ENCODE measurements at regions of chr19 and their contacts with region 1.

Region 1: GRCh38 chr19:18846862-18847548 is 15.2 kb downstream of the UPF1 start:
- DNase-seq: peak; percentile 91
- ATAC-seq: peak; percentile 88

Region 2: DNA sequence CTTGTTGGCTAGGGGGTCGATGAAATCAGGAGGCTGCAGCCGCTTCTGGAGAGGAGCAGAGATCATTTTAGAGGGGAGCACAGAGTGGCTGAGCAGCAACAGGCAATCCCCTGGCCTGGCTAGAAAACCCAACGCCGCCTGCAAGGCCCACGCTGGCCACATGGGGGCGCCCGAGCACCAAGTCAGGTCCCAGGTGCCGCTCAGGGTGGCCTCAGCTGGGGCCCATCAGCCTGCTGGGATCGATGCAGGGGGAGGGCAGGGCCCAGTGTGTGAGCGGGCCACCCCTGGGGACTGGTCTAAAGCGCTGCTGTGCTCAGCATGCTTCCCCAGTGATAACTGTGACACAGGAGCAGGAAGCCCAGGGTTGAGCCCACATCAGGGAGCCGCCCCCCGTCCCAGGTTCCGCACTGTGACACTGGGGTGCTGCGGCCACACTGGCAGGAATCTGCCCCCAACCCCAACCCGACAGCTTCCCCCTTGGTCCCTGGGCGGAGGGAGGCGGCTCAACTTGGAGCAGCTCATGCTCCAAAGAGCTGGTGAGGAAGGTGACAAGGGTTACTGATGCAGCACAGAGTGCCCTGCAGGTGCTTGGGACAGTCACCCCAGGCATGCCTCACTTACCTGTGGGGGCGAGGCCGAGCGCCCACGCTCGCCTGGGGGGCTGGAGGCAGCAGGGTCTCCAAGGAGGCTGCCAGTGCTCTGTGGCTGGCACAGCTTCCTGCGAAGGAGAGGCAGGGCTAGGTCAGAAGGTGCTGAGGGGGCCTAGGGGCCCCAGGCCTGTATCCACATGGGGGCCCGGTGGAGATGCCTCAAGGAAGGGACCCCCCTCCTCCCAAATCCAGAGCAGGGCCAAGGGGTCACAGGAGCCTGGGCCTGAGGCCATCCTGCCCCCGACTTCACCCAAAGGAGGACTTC is 395.8 kb before region 1 on chr19:
- intact Hi-C with region 1: loop called (anchors 10 kb)
- DNase-seq: peak; percentile 92
- ATAC-seq: peak; percentile 80

Region 3: DNA sequence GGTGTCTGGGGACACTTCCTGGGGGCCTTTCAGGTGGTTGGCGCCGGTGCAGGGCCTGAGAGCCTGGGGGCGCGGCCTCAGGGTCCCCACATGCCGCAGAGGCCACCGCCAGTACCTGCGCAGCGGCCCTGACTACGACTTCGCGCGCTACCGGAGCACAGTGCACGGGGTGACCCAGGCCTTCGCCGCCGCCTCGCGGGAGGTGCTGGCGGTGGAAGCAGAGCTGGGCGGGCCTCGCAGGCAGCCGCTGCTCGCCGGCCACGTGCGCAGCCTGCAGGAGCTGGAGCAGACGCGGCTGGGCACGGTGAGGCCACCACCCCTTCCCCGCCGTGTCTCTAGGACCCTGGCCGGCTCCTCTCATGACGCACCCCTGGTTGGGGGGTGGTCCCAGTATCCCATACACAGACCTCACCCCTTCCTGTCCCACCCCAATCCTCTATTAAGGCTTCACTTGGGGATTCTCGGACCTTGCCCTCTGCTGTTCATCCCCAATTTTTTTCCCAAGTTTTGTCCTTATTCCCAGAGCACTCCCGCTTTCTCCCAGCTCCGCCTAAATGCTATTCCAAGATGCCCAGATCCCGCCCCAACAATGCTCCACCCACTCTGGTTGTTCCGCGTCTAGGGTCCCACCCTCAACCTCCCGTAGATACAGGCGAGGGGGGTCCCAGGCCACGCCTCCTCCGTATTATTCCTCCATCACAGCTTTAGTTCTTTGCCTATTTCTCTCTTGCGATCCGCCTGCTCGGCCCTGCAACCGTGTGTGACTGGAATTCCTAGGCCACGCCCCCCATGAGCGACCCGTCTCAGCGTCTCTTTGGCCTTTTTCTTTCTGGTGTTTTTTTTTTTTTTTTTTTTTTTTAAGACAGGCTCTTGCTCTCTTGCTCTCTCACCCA is 257.4 kb before region 1 on chr19:
- intact Hi-C with region 1: loop called (anchors 5 kb)
- DNase-seq: peak; percentile 82
- ATAC-seq: peak; percentile 60